Heart left ventricle (tissue), 16 donors: ENCODE measurements at regions of chr2 and their contacts with region 1.

Region 1: DNA sequence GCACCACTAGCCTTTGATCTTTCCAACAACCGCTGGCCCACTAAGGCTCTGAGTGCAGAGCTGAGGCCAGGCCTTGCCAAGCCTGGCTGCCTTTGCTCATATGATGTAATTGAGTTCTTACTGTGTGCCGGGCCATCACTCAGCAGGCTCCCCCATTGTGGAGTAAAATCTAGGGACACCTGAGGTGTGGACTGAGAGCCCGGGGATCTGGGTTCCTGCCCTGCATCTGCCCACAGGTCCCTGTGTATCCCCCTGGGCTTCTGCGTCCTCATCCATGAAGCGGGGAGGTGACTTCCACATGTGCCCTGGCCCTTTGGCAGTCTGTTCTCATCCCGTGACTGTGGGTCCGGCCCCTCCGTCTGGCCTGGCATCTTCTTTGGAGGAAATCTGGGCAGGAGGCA is 33.8 kb downstream of the GREB1 start:
- DNase-seq: no peak
- ATAC-seq: no peak
- H3K4me3 ChIP-seq: no peak overlapping the region
- H3K27ac ChIP-seq: no peak overlapping the region
- H3K4me1 ChIP-seq: no peaks in the 10 kb centered on the region
- H3K27me3 ChIP-seq: no peaks in the 10 kb centered on the region
- CTCF ChIP-seq: no peak
- POLR2A ChIP-seq: no peak

Region 2: GRCh38 chr2:11498543-11499080 is 69.0 kb before region 1 on chr2:
- intact Hi-C with region 1: loop called in 1 of 10 experiments (anchors 5 kb)
- DNase-seq: peak; percentile 89 to 95 (median 90)
- ATAC-seq: peak; percentile 95 to 97 (median 96)
- H3K4me3 ChIP-seq: no peak overlapping the region
- H3K27ac ChIP-seq: peak overlapping the region in 11 of 12 donors; percentile 19 to 91 (median 82)
- H3K4me1 ChIP-seq: peaks cover 0 to 28% (median 16%) of the 10 kb centered on the region in 12 donors
- H3K27me3 ChIP-seq: peaks cover 0 to 4% (median 0%) of the 10 kb centered on the region in 9 donors
- CTCF ChIP-seq: peak in 1 of 12 donors; percentile 8
- POLR2A ChIP-seq: peak in 1 of 2 donors; percentile 26

Region 3: GRCh38 chr2:11647834-11648600 is 80.4 kb after region 1 on chr2:
- intact Hi-C with region 1: no loop called
- DNase-seq: no peak
- ATAC-seq: no peak
- H3K4me3 ChIP-seq: no peak overlapping the region
- H3K27ac ChIP-seq: no peak overlapping the region
- H3K4me1 ChIP-seq: peaks cover 0 to 7% (median 0%) of the 10 kb centered on the region in 12 donors
- H3K27me3 ChIP-seq: no peaks in the 10 kb centered on the region
- CTCF ChIP-seq: peak in 3 of 12 donors; percentile 9 to 28 (median 24)
- POLR2A ChIP-seq: no peak